Ovary (tissue), 10 donors: ENCODE measurements at regions of chr4 and their contacts with region 1.

Region 1: DNA sequence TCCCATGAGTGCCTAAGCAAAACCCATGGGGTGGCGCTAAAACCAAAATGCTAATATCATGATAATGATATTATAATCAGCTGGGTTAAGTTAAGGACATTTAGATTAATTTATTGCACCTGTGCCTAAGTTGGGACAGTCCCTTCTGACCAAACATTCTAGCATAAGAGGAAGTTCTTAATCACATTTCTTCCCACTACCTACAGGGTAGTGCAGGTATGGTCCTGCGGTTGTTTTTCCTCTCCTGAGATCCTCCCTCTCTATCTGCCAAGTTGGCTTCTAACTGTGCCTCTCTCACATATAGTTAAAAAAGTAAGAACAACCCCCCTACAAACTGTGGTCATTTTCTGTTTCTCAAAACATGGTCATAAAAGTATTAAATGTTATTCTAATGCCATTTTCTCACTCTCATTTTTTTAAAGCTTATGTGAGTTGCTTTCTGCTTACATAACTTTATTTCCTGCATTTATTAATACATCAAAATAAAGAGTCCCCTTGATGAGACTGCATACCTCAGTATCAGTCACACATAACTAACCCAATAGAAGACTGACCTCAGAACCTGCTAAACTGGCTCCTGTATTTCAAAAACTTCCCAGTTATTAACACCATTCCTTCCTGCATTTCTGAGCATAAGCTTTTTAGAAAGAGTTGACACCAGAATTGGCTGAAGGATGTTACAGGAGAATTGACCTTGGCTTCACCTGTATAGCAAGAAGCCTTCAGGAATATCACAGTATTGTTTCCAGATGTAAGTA is 1332.5 kb downstream of the FSTL5 start:
- DNase-seq: no peak
- H3K4me3 ChIP-seq: no peak overlapping the region
- H3K27ac ChIP-seq: no peak overlapping the region
- H3K4me1 ChIP-seq: no peaks in the 10 kb centered on the region
- H3K27me3 ChIP-seq: no peaks in the 10 kb centered on the region
- CTCF ChIP-seq: no peak
- EP300 ChIP-seq: no peak
- POLR2A ChIP-seq: no peak

Region 2: DNA sequence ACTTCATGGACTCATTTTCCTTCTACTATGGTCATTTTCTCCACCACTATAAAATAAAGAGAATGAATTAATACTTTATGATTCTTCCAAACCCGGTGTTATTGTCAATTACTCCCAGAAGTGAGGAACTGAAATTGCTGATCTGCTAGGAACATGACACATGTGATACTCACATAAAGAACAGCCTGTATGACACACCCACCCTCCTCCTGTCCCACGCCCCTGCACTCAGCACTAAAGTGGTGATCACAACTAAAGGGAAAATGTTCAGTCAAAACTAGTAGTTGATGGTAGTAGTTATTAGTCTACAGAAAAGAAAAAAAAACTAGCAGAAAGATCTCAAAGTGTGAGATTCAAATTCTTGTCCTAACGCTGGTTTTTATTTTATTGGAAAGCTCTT is 220.2 kb before region 1 on chr4:
- intact Hi-C with region 1: no loop called
- DNase-seq: no peak
- H3K4me3 ChIP-seq: no peak overlapping the region
- H3K27ac ChIP-seq: no peak overlapping the region
- H3K4me1 ChIP-seq: no peaks in the 10 kb centered on the region
- H3K27me3 ChIP-seq: no peaks in the 10 kb centered on the region
- CTCF ChIP-seq: no peak
- EP300 ChIP-seq: no peak
- POLR2A ChIP-seq: no peak

Region 3: GRCh38 chr4:160709026-160709425 is 122.3 kb before region 1 on chr4:
- intact Hi-C with region 1: no loop called
- DNase-seq: no peak
- H3K4me3 ChIP-seq: no peak overlapping the region
- H3K27ac ChIP-seq: no peak overlapping the region
- H3K4me1 ChIP-seq: no peaks in the 10 kb centered on the region
- H3K27me3 ChIP-seq: no peaks in the 10 kb centered on the region
- CTCF ChIP-seq: no peak
- EP300 ChIP-seq: no peak
- POLR2A ChIP-seq: no peak

Region 4: DNA sequence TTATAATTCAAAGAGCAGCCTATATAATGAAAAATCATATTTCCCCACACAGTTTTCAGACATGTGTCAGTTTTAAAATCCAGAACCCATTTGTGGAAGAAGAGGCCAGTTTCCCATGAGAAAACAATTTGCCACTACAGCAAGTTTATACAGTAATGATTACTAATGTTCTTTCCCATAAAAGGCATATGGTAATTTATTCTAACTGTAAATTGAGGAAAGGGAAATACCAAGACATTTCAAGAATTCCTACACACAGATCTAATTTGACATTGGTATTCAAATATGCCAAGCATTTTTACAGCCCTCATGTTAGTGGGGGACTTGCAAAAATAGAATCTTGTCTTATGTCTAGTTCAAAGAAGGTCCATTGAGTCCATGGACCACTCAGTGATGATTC is 36.1 kb before region 1 on chr4:
- intact Hi-C with region 1: loop called in 1 of 4 experiments (anchors 1 kb)
- DNase-seq: no peak
- H3K4me3 ChIP-seq: no peak overlapping the region
- H3K27ac ChIP-seq: no peak overlapping the region
- H3K4me1 ChIP-seq: no peaks in the 10 kb centered on the region
- H3K27me3 ChIP-seq: no peaks in the 10 kb centered on the region
- CTCF ChIP-seq: no peak
- EP300 ChIP-seq: no peak
- POLR2A ChIP-seq: no peak

Region 5: GRCh38 chr4:160981083-160981482 is 149.7 kb after region 1 on chr4:
- intact Hi-C with region 1: no loop called
- DNase-seq: no peak
- H3K4me3 ChIP-seq: no peak overlapping the region
- H3K27ac ChIP-seq: no peak overlapping the region
- H3K4me1 ChIP-seq: no peaks in the 10 kb centered on the region
- H3K27me3 ChIP-seq: no peaks in the 10 kb centered on the region
- CTCF ChIP-seq: no peak
- EP300 ChIP-seq: no peak
- POLR2A ChIP-seq: no peak